Activated B cell treated with CpG ODN at 0.5 μM for 24 hours (primary cell): ENCODE measurements at regions of chr9 and their contacts with region 1.

Region 1: GRCh38 chr9:19230356-19231125 is at the start of gene DENND4C:
- DNase-seq: peak; percentile 76
- ATAC-seq: peak; percentile 72
- H3K4me3 Mint-ChIP-seq: no peak within 1 kb of the TSS
- H3K27ac Mint-ChIP-seq: peak within 1 kb of the TSS; percentile 81
- H3K4me1 Mint-ChIP-seq: peaks cover 10% of the 10 kb centered on the region
- H3K27me3 Mint-ChIP-seq: no peaks in the 10 kb centered on the region
- CTCF ChIP-seq: no peak
- total RNA-seq, gene DENND4C: 27.1 and 33.4 TPM in 2 replicates

Region 2: DNA sequence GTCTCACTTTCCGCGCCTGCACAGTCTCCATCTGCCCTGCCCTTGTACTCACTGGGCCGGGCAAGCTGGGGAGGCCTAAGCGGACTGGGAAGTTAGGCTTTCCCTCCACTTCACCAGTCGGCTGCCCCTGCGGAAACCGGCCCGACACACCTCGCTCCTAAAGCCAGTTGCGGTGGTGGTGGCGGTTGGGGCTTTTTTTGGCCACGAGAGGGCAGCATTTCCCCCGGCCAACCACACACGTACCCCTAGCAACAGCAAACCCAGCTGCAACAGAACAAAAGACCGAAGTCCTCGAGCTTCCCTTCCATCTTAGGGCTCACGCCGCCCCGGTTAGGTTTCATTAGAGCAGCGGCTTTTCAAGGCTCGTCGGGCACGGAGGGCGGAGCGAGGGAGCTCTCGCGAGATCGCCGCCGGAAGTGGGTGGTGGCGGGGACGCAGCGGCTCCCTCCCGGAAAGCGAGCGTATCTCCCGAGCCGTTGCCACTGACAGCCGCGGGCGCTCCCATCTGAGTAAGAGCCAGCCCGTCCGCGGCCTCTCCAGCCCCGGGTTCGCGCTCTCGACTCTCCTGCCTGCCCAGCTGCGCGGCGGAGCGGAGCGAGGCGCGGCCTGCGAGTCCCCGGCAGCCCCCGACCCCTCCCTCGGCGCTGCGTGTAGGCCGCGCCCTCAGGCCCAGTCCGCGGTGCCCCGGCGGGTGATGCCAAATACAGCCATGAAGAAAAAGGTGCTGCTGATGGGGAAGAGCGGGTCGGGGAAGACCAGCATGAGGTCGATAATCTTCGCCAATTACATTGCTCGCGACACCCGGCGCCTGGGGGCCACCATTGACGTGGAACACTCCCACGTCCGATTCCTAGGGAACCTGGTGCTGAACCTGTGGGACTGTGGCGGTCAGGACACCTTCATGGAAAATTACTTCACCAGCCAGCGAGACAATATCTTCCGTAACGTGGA is 181.3 kb before region 1 on chr9 and contains the start of gene RRAGA:
- CTCF ChIA-PET with region 1: interaction called, 6 read pairs
- POLR2A ChIA-PET with region 1: interaction called, 6 read pairs
- intact Hi-C with region 1: loop called (anchors 1 kb)
- DNase-seq: peak; percentile 98
- ATAC-seq: peak; percentile 90
- H3K4me3 Mint-ChIP-seq: peak within 1 kb of the TSS; percentile 91
- H3K27ac Mint-ChIP-seq: peak within 1 kb of the TSS; percentile 97
- H3K4me1 Mint-ChIP-seq: peaks cover 46% of the 10 kb centered on the region
- H3K27me3 Mint-ChIP-seq: no peaks in the 10 kb centered on the region
- CTCF ChIP-seq: no peak
- total RNA-seq, gene RRAGA: 44.6 and 45.0 TPM in 2 replicates

Region 3: DNA sequence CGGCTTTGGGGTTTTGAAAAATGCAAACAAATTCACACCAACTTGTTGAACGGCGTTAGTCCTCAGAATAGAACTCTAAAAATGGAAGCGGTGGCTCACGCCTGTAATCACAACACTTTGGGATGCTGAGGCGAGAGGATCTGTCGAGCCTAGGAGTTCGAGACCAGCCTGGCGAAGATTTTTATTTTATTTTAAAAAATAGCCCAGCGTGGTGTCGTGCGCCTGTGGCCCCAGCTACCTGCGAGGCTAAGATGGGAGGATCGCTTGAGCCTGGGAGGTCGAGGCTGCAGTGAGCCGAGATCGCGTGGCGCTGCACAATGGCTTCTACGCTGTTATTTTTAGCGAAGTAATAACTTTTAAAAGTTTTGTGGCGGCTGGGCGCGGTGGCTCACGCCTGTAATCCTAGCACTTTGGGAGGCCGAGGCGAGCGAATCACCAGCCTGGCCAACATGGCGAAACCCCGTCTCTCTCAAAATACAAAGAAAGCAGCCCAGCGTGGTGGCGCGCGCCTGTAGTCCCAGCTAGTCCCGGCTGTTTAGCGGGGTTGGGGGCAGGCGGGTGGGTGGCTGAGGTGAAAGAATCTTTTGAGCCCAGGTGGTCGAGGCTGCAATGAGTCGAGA is 102.5 kb before region 1 on chr9:
- CTCF ChIA-PET with region 1: interaction called, 3 read pairs
- POLR2A ChIA-PET with region 1: interaction called, 6 read pairs
- intact Hi-C with region 1: loop called (anchors 1 kb)
- DNase-seq: peak; percentile 18
- ATAC-seq: peak; percentile 12
- H3K4me3 Mint-ChIP-seq: peak overlapping the region; percentile 89
- H3K27ac Mint-ChIP-seq: peak overlapping the region; percentile 79
- H3K4me1 Mint-ChIP-seq: peaks cover 29% of the 10 kb centered on the region
- H3K27me3 Mint-ChIP-seq: no peaks in the 10 kb centered on the region
- CTCF ChIP-seq: no peak

Region 4: DNA sequence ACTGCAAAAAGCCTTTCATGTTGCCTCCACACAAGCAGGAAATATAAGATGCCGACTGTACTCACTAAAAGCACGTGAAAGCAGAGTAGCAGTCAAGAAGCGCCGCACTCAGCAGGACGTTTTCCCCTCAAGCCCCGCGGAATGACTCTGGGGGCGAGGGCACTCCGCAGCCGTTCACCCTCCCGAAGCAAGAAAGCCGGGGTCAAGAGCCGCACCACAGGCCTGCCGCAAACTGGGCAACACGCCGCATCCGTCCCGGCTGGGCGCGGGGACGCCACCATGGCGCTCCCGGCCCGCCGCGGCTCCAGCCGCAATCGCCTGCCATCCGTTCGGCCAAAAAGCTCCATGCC is 149.1 kb after region 1 on chr9:
- CTCF ChIA-PET with region 1: no interaction called
- POLR2A ChIA-PET with region 1: interaction called, 31 read pairs
- intact Hi-C with region 1: loop called (anchors 1 kb)
- DNase-seq: no peak
- ATAC-seq: peak; percentile 37
- H3K4me3 Mint-ChIP-seq: peak overlapping the region; percentile 100
- H3K27ac Mint-ChIP-seq: peak overlapping the region; percentile 99
- H3K4me1 Mint-ChIP-seq: peaks cover 49% of the 10 kb centered on the region
- H3K27me3 Mint-ChIP-seq: no peaks in the 10 kb centered on the region
- CTCF ChIP-seq: no peak

Region 5: DNA sequence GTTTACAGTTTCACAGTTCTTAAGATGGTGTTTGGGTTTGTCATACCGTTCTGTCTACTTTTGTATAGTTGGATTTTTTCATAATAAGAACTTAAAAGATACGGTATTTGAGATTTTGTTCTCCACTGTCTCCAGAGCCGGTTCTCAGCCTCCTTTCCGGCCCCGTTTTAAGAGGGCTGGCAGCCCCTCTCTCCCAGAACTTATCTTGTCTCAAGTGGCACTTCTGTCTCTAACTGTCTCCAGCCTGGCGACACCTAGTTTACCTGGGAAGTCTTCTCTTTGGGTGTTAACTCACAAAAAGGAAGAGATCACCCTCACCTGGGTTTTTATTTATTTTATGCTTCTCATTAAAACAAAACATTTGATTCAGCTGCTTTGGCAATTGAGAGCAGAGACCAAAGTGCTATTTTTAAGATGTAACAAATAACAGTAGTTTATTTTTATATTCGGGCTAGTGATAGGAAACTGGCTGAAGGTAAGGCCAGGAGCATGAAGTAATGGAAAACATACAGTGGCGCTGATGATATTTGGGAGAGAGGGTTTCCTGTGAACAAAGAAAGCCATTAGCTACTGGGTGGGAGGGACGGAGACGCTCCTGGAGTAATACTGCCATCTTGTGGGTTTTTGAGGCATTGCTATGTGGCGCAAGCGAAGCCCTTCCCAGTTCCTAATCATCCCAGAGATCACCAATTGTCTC is 226.6 kb after region 1 on chr9:
- CTCF ChIA-PET with region 1: no interaction called
- POLR2A ChIA-PET with region 1: interaction called, 3 read pairs
- intact Hi-C with region 1: loop called (anchors 2 kb)
- DNase-seq: peak; percentile 32
- ATAC-seq: peak; percentile 97
- H3K4me3 Mint-ChIP-seq: no peak overlapping the region
- H3K27ac Mint-ChIP-seq: no peak overlapping the region
- H3K4me1 Mint-ChIP-seq: peaks cover 13% of the 10 kb centered on the region
- H3K27me3 Mint-ChIP-seq: no peaks in the 10 kb centered on the region
- CTCF ChIP-seq: peak; percentile 80

Region 6: GRCh38 chr9:20684035-20684872 is 1453.7 kb after region 1 on chr9 and contains the start of gene FOCAD:
- CTCF ChIA-PET with region 1: no interaction called
- POLR2A ChIA-PET with region 1: no interaction called
- intact Hi-C with region 1: loop called (anchors 2 kb)
- DNase-seq: peak; percentile 95
- ATAC-seq: peak; percentile 99
- H3K4me3 Mint-ChIP-seq: peak within 1 kb of the TSS; percentile 91
- H3K27ac Mint-ChIP-seq: peak within 1 kb of the TSS; percentile 66
- H3K4me1 Mint-ChIP-seq: peaks cover 15% of the 10 kb centered on the region
- H3K27me3 Mint-ChIP-seq: no peaks in the 10 kb centered on the region
- CTCF ChIP-seq: no peak
- total RNA-seq, gene FOCAD: 11.7 and 11.9 TPM in 2 replicates